Dendritic cell treated with granulocyte-macrophage colony-stimulating factor and Interleukin-4, amounts not matched to agents 40 ng/mL and 50 ng/mL, for 4 days (primary cell): ENCODE measurements at regions of chr16 and their contacts with region 1.

Region 1: GRCh38 chr16:15954814-15955151 is 5.4 kb downstream of the ABCC1 start:
- H3K4me3 Mint-ChIP-seq: peak overlapping the region; percentile 18
- H3K27ac Mint-ChIP-seq: peak overlapping the region; percentile 86
- H3K4me1 Mint-ChIP-seq: peaks cover 81% of the 10 kb centered on the region
- H3K27me3 Mint-ChIP-seq: no peaks in the 10 kb centered on the region

Region 2: DNA sequence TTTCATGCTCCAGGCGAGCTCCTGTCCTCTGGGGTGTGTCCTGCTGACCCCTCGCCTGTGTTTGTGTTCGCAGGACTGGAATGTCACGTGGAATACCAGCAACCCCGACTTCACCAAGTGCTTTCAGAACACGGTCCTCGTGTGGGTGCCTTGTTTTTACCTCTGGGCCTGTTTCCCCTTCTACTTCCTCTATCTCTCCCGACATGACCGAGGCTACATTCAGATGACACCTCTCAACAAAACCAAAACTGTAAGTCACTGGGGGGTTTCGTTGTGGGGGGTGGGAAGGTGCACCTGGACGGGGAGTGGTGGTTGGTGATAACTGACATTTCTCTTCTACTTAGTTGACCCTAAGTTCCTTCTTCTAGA is 52.9 kb after region 1 on chr16:
- intact Hi-C with region 1: loop called (anchors 5 kb)
- H3K4me3 Mint-ChIP-seq: no peak overlapping the region
- H3K27ac Mint-ChIP-seq: peak overlapping the region; percentile 42
- H3K4me1 Mint-ChIP-seq: peaks cover 22% of the 10 kb centered on the region
- H3K27me3 Mint-ChIP-seq: no peaks in the 10 kb centered on the region